Activated CD8-positive, alpha-beta T cell treated with anti-CD3 and anti-CD28 coated beads, Interleukin-2, amount 10 ng/mL, durations not matched to agents 7 days and 5 days (primary cell): ENCODE measurements at regions of chr5 and their contacts with region 1.

Region 1: DNA sequence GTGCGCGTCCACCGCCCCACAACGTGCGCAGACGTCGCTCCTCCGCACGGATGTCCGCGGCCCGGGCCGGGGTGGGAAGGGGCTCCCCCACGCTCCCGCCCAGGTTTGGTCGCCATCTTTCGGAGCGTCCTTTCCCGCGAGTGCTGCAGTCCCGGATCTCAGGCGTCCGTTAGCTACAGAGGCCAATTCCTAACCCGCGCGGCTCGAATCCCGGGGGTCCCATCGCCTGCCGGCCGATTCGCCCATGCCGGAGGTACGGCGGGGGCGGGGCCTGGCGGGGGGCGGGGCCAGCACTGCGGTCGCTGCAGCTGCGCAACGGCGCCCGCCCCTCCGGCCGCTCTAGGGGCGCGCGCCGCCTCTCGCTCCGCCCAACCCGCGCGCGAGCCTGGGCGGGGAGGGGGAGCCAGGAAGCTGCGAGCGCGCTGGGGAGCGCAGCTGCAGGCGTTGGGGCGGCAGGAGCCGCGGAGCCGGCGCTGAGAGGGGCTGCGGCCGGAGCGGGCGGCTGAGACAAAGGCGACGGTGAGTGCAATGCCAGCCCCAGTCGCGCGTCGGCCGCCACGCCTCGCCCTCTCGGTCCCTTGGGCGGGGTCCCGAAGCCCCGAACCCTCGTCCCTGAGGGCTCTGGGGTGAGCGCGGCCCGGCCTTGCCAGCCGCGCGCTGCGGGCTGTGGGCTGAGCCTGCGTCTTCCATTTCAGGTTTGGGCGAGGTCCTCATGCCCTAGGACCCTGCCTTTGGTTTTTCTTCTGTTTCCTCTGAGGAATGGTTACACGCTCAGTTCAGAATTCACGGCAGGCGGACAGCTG is at the start of gene CDC42SE2:
- DNase-seq: peak; percentile 87
- ATAC-seq: peak; percentile 85
- H3K4me3 Mint-ChIP-seq: peak within 1 kb of the TSS; percentile 86
- H3K27ac Mint-ChIP-seq: peak within 1 kb of the TSS; percentile 94
- H3K4me1 Mint-ChIP-seq: peaks cover 45% of the 10 kb centered on the region
- H3K27me3 Mint-ChIP-seq: no peaks in the 10 kb centered on the region
- total RNA-seq, gene CDC42SE2: 115 to 126 TPM

Region 2: GRCh38 chr5:131109540-131110255 is 154.2 kb before region 1 on chr5:
- CTCF ChIA-PET with region 1: no interaction called
- POLR2A ChIA-PET with region 1: no interaction called
- DNase-seq: peak; percentile 46
- ATAC-seq: no peak
- H3K4me3 Mint-ChIP-seq: no peak overlapping the region
- H3K27ac Mint-ChIP-seq: no peak overlapping the region
- H3K4me1 Mint-ChIP-seq: peaks cover 1% of the 10 kb centered on the region
- H3K27me3 Mint-ChIP-seq: no peaks in the 10 kb centered on the region

Region 3: GRCh38 chr5:131165119-131165727 is 98.6 kb before region 1 on chr5 and contains the start of gene HINT1:
- CTCF ChIA-PET with region 1: interaction called, 11 read pairs
- POLR2A ChIA-PET with region 1: interaction called, 39 read pairs
- DNase-seq: peak; percentile 94
- ATAC-seq: peak; percentile 90
- H3K4me3 Mint-ChIP-seq: peak within 1 kb of the TSS; percentile 96
- H3K27ac Mint-ChIP-seq: peak within 1 kb of the TSS; percentile 98
- H3K4me1 Mint-ChIP-seq: peaks cover 49% of the 10 kb centered on the region
- H3K27me3 Mint-ChIP-seq: no peaks in the 10 kb centered on the region
- total RNA-seq, gene HINT1: 232 to 246 TPM

Region 4: GRCh38 chr5:131209506-131210150 is 54.2 kb before region 1 on chr5:
- CTCF ChIA-PET with region 1: interaction called, 7 read pairs
- POLR2A ChIA-PET with region 1: interaction called, 87 read pairs
- DNase-seq: peak; percentile 62
- ATAC-seq: peak; percentile 94
- H3K4me3 Mint-ChIP-seq: peak overlapping the region; percentile 75
- H3K27ac Mint-ChIP-seq: peak overlapping the region; percentile 97
- H3K4me1 Mint-ChIP-seq: peaks cover 56% of the 10 kb centered on the region
- H3K27me3 Mint-ChIP-seq: no peaks in the 10 kb centered on the region

Region 5: GRCh38 chr5:131281133-131281867 is 17.5 kb after region 1 on chr5:
- CTCF ChIA-PET with region 1: interaction called, 33 read pairs
- POLR2A ChIA-PET with region 1: interaction called, 84 read pairs
- DNase-seq: no peak
- ATAC-seq: peak; percentile 79
- H3K4me3 Mint-ChIP-seq: peak overlapping the region; percentile 78
- H3K27ac Mint-ChIP-seq: peak overlapping the region; percentile 85
- H3K4me1 Mint-ChIP-seq: peaks cover 86% of the 10 kb centered on the region
- H3K27me3 Mint-ChIP-seq: no peaks in the 10 kb centered on the region

Region 6: GRCh38 chr5:131375351-131375750 is 111.5 kb after region 1 on chr5:
- CTCF ChIA-PET with region 1: interaction called, 6 read pairs
- POLR2A ChIA-PET with region 1: interaction called, 158 read pairs
- DNase-seq: no peak
- ATAC-seq: no peak
- H3K4me3 Mint-ChIP-seq: peak overlapping the region; percentile 19
- H3K27ac Mint-ChIP-seq: peak overlapping the region; percentile 87
- H3K4me1 Mint-ChIP-seq: peaks cover 81% of the 10 kb centered on the region
- H3K27me3 Mint-ChIP-seq: no peaks in the 10 kb centered on the region

Region 7: DNA sequence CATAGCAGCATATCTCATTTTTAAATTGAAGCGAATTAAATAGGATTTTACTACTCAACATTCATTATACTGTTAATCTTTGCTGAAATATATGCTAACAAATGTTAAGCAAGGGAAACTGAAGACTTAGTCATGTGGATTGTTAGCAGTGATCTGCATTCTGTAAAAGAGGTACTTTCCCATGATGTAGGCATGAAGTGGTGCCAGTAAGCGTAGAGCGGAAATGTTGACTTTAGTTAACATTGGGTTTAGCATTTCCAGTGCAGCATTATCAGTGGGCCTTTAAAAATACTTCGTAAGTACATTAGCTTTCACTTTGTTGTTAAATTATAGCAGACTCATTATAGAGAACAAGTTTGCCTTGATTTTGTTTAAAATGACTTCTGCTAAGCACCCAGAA is 130.3 kb after region 1 on chr5:
- CTCF ChIA-PET with region 1: interaction called, 7 read pairs
- POLR2A ChIA-PET with region 1: interaction called, 20 read pairs
- DNase-seq: peak; percentile 61
- ATAC-seq: peak; percentile 86
- H3K4me3 Mint-ChIP-seq: peak overlapping the region; percentile 61
- H3K27ac Mint-ChIP-seq: peak overlapping the region; percentile 87
- H3K4me1 Mint-ChIP-seq: peaks cover 67% of the 10 kb centered on the region
- H3K27me3 Mint-ChIP-seq: no peaks in the 10 kb centered on the region